Ascending aorta (tissue), 2 donors: ENCODE measurements at regions of chr3 and their contacts with region 1.

Region 1: DNA sequence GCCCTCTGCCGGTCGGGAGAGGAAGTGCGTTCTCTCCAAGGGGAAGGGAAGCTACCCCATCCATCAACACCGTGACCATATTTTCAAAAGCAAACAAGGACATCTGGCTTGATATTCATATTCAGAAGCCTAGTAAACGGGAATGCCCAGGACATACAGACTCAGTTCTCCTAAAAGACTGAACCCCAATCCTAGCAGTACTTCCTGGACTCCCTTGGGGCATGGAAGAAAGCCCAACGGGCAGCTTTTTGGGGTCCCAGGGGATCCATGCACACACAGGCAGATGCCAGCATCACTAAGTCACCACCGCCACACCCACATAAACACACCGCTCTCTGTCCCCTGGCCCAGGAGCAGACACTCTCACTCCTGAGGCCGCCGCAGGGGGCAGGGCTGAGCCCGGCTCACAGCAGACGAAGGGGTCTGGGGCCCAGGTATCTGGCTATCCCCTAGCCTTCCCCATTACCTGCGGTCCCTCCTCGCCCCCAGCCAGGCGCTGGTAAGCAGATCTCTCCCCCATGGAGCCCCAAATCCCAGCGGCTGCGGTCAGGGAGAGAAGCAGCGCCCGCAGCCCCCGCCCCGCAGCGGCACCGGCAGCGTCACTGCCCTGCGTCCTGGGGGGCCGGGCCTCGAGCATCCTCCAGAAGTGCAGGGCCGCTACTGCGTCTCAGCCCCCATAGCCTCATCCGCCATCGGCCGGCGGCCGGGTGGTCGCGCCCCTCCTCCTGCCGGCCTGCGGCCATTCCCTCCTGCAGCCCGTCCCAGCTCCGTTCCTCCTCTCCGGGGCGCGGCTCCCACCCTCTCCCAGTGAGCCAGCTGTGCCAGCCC is 13.4 kb downstream of the TNK2 start:
- DNase-seq: peak in 1 of 2 donors; percentile 58
- H3K4me3 ChIP-seq: peak overlapping the region; percentile 77 to 90
- H3K27ac ChIP-seq: peak overlapping the region; percentile 94 to 98
- H3K4me1 ChIP-seq: peaks cover 20 to 55% of the 10 kb centered on the region in 2 donors
- H3K27me3 ChIP-seq: no peaks in the 10 kb centered on the region
- CTCF ChIP-seq: peak; percentile 87 to 97 (median 94)

Region 2: GRCh38 chr3:195863121-195864006 is 31.6 kb before region 1 on chr3:
- intact Hi-C with region 1: loop called (anchors 1 kb)
- DNase-seq: peak; percentile 74 to 97
- H3K4me3 ChIP-seq: peak overlapping the region in 1 of 2 donors; percentile 39
- H3K27ac ChIP-seq: peak overlapping the region; percentile 88 to 95
- H3K4me1 ChIP-seq: peaks cover 6 to 9% of the 10 kb centered on the region in 2 donors
- H3K27me3 ChIP-seq: no peaks in the 10 kb centered on the region
- CTCF ChIP-seq: peak; percentile 96 to 98 (median 97)

Region 3: DNA sequence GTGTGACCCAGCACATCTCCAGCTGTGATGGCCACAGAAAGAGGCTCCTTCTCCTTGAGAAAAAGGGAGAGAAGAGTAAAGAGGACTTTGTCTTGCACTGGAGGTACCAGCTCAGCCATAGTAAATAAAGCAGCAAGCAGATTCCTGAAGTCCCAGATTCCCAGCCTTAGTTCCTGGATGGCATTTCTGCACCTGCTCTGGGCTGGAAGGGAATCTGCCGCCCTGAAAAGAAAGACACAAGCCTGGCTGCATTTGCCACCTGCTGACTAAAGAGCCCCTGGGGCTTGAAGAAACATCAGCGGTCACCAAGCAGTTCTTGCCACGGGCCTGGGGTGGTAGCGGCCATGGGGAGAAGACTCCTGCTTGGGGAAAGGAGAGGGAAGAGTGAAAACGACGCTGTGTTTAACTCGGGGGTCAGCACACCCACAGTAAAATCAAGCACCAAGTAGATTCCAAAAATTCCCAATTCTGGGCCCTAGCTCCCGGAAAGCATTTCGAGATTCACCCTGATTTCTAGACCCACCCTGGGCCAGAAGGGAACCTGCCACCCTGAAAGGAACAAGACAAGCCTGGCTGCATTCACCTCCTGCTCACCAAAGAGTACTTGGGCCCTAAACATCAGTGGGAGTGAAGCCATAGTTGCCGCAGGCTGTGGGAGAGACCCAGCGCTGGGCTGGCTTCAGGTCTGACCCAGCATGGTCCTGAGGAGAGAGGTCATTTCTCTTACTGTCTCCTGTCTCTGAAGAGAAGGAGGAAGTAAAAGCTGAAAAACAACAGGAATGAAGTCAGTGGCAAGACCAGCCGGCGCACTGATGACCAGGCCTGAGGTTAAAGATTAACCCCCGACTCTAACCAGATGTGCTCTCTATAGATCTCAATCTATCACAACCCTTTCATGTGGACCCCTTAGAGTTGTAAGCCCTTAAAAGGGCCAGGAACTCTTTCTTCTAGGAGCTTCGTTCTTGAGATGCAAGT is 37.7 kb after region 1 on chr3:
- intact Hi-C with region 1: no loop called
- DNase-seq: no peak
- H3K4me3 ChIP-seq: no peak overlapping the region
- H3K27ac ChIP-seq: no peak overlapping the region
- H3K4me1 ChIP-seq: no peaks in the 10 kb centered on the region
- H3K27me3 ChIP-seq: no peaks in the 10 kb centered on the region
- CTCF ChIP-seq: no peak